Sigmoid colon (tissue), 7 donors: ENCODE measurements at regions of chr2 and their contacts with region 1.

Region 1: GRCh38 chr2:177143444-177143843 is 69.2 kb upstream of the HNRNPA3 start:
- DNase-seq: peak; percentile 82
- H3K4me3 ChIP-seq: no peak overlapping the region
- H3K27ac ChIP-seq: no peak overlapping the region
- H3K4me1 ChIP-seq: peaks cover 0 to 11% (median 4%) of the 10 kb centered on the region in 4 donors
- H3K27me3 ChIP-seq: peaks cover 0 to 6% (median 0%) of the 10 kb centered on the region in 3 donors
- CTCF ChIP-seq: no peak
- EP300 ChIP-seq: peak in 3 of 4 donors; percentile 49 to 73 (median 65)
- POLR2A ChIP-seq: no peak

Region 2: DNA sequence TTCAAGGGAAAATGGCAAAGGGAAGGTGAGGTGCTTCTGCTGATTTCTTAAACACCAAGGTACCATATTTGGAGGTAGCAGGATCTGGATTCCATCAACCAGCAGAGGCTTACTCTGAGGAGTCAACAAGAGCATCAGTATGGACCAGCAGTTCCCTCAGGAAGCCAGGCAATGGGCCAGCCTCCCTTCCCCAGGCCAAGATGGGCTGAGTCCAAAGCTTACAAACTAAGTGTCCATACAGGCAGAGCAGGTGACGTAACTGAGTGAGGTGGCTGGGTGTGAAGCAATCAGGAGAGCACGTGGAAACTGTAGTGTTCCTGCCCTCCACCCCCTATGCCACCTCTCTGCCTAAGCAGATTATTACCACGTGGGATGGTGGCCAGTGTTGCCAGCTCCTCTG is 65.0 kb before region 1 on chr2:
- intact Hi-C with region 1: loop called (anchors 5 kb)
- DNase-seq: peak; percentile 98
- H3K4me3 ChIP-seq: no peak overlapping the region
- H3K27ac ChIP-seq: peak overlapping the region in 3 of 4 donors; percentile 74 to 85 (median 77)
- H3K4me1 ChIP-seq: peaks cover 0 to 49% (median 15%) of the 10 kb centered on the region in 4 donors
- H3K27me3 ChIP-seq: no peaks in the 10 kb centered on the region
- CTCF ChIP-seq: no peak
- EP300 ChIP-seq: peak; percentile 51 to 93 (median 73)
- POLR2A ChIP-seq: no peak

Region 3: GRCh38 chr2:177161744-177162460 is 18.5 kb after region 1 on chr2:
- intact Hi-C with region 1: no loop called
- DNase-seq: no peak
- H3K4me3 ChIP-seq: no peak overlapping the region
- H3K27ac ChIP-seq: no peak overlapping the region
- H3K4me1 ChIP-seq: peaks cover 0 to 18% (median 12%) of the 10 kb centered on the region in 4 donors
- H3K27me3 ChIP-seq: no peaks in the 10 kb centered on the region
- CTCF ChIP-seq: peak in 3 of 4 experiments; percentile 24 to 46 (median 35)
- EP300 ChIP-seq: no peak
- POLR2A ChIP-seq: no peak